Activated CD4-positive, alpha-beta T cell treated with anti-CD3 and anti-CD28 coated beads for 36 hours (primary cell): ENCODE measurements at regions of chr9 and their contacts with region 1.

Region 1: GRCh38 chr9:130128733-130129431 is 43.3 kb upstream of the NCS1 start:
- DNase-seq: peak; percentile 70
- ATAC-seq: peak; percentile 82
- H3K4me3 Mint-ChIP-seq: peak overlapping the region; percentile 75
- H3K27ac Mint-ChIP-seq: peak overlapping the region; percentile 100
- H3K4me1 Mint-ChIP-seq: peaks cover 54% of the 10 kb centered on the region
- H3K27me3 Mint-ChIP-seq: no peaks in the 10 kb centered on the region

Region 2: GRCh38 chr9:129919841-129920240 is 209.0 kb before region 1 on chr9:
- CTCF ChIA-PET with region 1: no interaction called
- POLR2A ChIA-PET with region 1: no interaction called
- intact Hi-C with region 1: no loop called
- DNase-seq: no peak
- ATAC-seq: no peak
- H3K4me3 Mint-ChIP-seq: no peak overlapping the region
- H3K27ac Mint-ChIP-seq: peak overlapping the region; percentile 44
- H3K4me1 Mint-ChIP-seq: peaks cover 34% of the 10 kb centered on the region
- H3K27me3 Mint-ChIP-seq: no peaks in the 10 kb centered on the region

Region 3: DNA sequence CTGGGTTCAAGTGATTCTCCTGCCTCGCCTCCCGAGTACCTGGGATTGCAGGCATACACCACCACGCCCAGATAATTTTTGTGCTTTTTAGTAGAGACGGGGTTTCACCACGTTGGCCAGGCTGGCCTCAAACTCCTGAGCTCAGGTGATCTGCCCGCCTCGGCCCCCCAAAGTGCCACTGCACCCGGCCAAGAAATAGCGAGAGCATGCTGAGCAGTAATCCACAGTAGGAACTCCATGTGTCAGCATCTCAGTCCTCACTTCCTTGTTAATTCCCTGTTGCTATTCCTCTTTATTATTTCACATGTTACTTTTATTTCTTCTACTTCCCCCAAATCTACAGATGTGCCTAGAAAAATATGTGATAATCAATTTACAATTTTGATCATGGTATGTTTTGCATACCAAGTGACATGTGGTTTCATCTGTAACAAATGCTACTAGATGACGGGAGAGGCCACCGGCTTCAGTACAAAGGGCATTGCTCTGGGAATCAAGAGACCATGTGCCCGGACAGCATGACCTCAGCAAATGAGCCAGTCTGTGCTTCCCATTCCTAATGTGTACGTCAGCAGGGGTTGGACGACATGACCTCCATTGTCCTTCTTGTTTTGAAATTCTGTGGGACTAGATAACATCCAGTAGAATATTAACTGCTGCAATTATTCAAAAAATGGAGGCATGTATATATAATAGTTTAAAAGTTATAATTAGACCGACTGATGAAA is 147.5 kb before region 1 on chr9:
- CTCF ChIA-PET with region 1: no interaction called
- POLR2A ChIA-PET with region 1: no interaction called
- intact Hi-C with region 1: no loop called
- DNase-seq: no peak
- ATAC-seq: no peak
- H3K4me3 Mint-ChIP-seq: no peak overlapping the region
- H3K27ac Mint-ChIP-seq: peak overlapping the region; percentile 58
- H3K4me1 Mint-ChIP-seq: peaks cover 55% of the 10 kb centered on the region
- H3K27me3 Mint-ChIP-seq: no peaks in the 10 kb centered on the region

Region 4: GRCh38 chr9:130042833-130043653 is 85.8 kb before region 1 on chr9 and contains the start of gene FNBP1:
- CTCF ChIA-PET with region 1: no interaction called
- POLR2A ChIA-PET with region 1: no interaction called
- intact Hi-C with region 1: no loop called
- DNase-seq: peak; percentile 91
- ATAC-seq: peak; percentile 63
- H3K4me3 Mint-ChIP-seq: peak within 1 kb of the TSS; percentile 100
- H3K27ac Mint-ChIP-seq: peak within 1 kb of the TSS; percentile 100
- H3K4me1 Mint-ChIP-seq: peaks cover 33% of the 10 kb centered on the region
- H3K27me3 Mint-ChIP-seq: no peaks in the 10 kb centered on the region
- total RNA-seq, gene FNBP1: 254 to 354 TPM

Region 5: GRCh38 chr9:130172161-130172857 is 43.4 kb after region 1 on chr9 and contains the start of gene NCS1:
- CTCF ChIA-PET with region 1: no interaction called
- POLR2A ChIA-PET with region 1: no interaction called
- intact Hi-C with region 1: loop called in 1 of 2 experiments (anchors 5 kb)
- DNase-seq: peak; percentile 74
- ATAC-seq: peak; percentile 70
- H3K4me3 Mint-ChIP-seq: peak within 1 kb of the TSS; percentile 73
- H3K27ac Mint-ChIP-seq: peak within 1 kb of the TSS; percentile 51
- H3K4me1 Mint-ChIP-seq: peaks cover 3% of the 10 kb centered on the region
- H3K27me3 Mint-ChIP-seq: peaks cover 13% of the 10 kb centered on the region
- total RNA-seq, gene NCS1: 24.8 to 25.2 TPM

Region 6: GRCh38 chr9:130235897-130236668 is 107.2 kb after region 1 on chr9:
- CTCF ChIA-PET with region 1: interaction called, 6 read pairs
- POLR2A ChIA-PET with region 1: no interaction called
- intact Hi-C with region 1: loop called (anchors 1 to 5 kb)
- DNase-seq: peak; percentile 79
- ATAC-seq: no peak
- H3K4me3 Mint-ChIP-seq: no peak overlapping the region
- H3K27ac Mint-ChIP-seq: peak overlapping the region; percentile 47
- H3K4me1 Mint-ChIP-seq: peaks cover 30% of the 10 kb centered on the region
- H3K27me3 Mint-ChIP-seq: no peaks in the 10 kb centered on the region

Region 7: DNA sequence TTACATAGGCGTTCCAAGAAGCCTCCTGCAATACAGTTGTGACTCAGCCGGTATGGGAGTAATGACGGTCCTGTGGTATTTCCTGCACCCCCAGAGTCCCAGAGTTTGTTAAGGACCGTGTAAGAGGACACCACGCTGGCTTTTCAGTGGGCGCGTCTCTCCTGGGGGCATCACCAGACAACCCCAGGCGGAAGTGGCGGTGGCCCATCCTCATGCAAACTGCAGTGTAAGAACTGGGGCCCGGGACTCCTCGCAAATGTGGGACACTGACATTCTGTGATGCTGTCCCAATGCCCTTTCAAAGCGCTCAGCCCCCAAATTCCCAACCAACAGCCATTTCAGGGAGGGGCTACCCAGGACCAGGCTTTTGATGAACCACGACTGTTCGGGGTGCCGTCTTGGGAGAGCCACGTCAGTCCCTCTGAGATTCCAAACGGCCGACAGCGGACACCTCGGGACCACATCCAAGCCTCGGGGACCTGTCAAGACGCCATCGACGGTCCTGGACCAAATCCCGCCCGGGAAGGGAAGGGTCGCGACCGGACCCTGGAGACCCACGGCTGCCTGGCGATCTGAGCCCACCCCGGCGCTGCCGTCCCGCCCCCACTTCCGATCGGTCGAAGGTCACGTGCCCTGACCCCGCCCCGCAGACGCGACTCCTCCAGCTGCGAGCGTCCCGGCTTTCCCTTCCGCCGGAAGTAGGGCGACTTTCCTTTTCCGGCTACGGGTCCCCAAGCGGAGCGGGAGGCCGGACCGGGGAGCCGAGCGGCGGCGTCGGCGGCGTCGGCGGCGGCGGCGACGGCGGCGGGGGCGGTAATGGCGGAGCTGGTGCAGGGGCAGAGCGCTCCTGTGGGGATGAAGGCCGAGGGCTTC is 450.2 kb after region 1 on chr9 and contains the start of gene FUBP3:
- CTCF ChIA-PET with region 1: no interaction called
- POLR2A ChIA-PET with region 1: no interaction called
- intact Hi-C with region 1: loop called in 1 of 2 experiments (anchors 2 kb)
- DNase-seq: peak; percentile 96
- ATAC-seq: peak; percentile 94
- H3K4me3 Mint-ChIP-seq: peak within 1 kb of the TSS; percentile 90
- H3K27ac Mint-ChIP-seq: peak within 1 kb of the TSS; percentile 89
- H3K4me1 Mint-ChIP-seq: peaks cover 32% of the 10 kb centered on the region
- H3K27me3 Mint-ChIP-seq: no peaks in the 10 kb centered on the region
- total RNA-seq, gene FUBP3: 36.4 to 38.5 TPM